ENCODE measurements at regions of chr1 and their contacts with region 1.

Region 1: GRCh38 chr1:101309334-101310311 is 72.8 kb downstream of the S1PR1 start:
- DNase-seq: peak; percentile 66
- H3K4me3 ChIP-seq: no peak overlapping the region; a peak in 1 of 4 replicates
- H3K27ac ChIP-seq: no peak overlapping the region
- H3K4me1 ChIP-seq: no peaks in the 10 kb centered on the region; a peak in 1 of 4 replicates
- H3K27me3 ChIP-seq: no peaks in the 10 kb centered on the region
- CTCF ChIP-seq: peak; percentile 96
- EP300 ChIP-seq: no peak
- RAD21 ChIP-seq: peak; percentile 91

Region 2: GRCh38 chr1:101238681-101239094 is 70.9 kb before region 1 on chr1:
- CTCF ChIA-PET with region 1: no interaction called
- POLR2A ChIA-PET with region 1: no interaction called
- DNase-seq: peak; percentile 86
- H3K4me3 ChIP-seq: no peak overlapping the region; a peak in 1 of 4 replicates
- H3K27ac ChIP-seq: no peak overlapping the region
- H3K4me1 ChIP-seq: peaks cover 0 to 8% of the 10 kb centered on the region in 2 experiments; a peak in 2 of 4 replicates
- H3K27me3 ChIP-seq: no peaks in the 10 kb centered on the region
- CTCF ChIP-seq: peak; percentile 94
- EP300 ChIP-seq: no peak
- RAD21 ChIP-seq: peak; percentile 85

Region 3: GRCh38 chr1:101323535-101323934 is 13.9 kb after region 1 on chr1:
- CTCF ChIA-PET with region 1: interaction called, 19 read pairs
- POLR2A ChIA-PET with region 1: no interaction called
- DNase-seq: no peak
- H3K4me3 ChIP-seq: no peak overlapping the region
- H3K27ac ChIP-seq: no peak overlapping the region
- H3K4me1 ChIP-seq: no peaks in the 10 kb centered on the region
- H3K27me3 ChIP-seq: no peaks in the 10 kb centered on the region; the same call in 1 of the 2 replicates
- CTCF ChIP-seq: no peak
- EP300 ChIP-seq: no peak
- RAD21 ChIP-seq: no peak

Region 4: GRCh38 chr1:101357444-101357986 is 47.9 kb after region 1 on chr1:
- CTCF ChIA-PET with region 1: interaction called, 34 read pairs
- POLR2A ChIA-PET with region 1: no interaction called
- DNase-seq: peak; percentile 72
- H3K4me3 ChIP-seq: no peak overlapping the region; a peak in 1 of 4 replicates
- H3K27ac ChIP-seq: no peak overlapping the region
- H3K4me1 ChIP-seq: no peaks in the 10 kb centered on the region
- H3K27me3 ChIP-seq: no peaks in the 10 kb centered on the region; the same call in 1 of the 2 replicates
- CTCF ChIP-seq: peak; percentile 91
- EP300 ChIP-seq: no peak
- RAD21 ChIP-seq: peak; percentile 81

Region 5: GRCh38 chr1:101506541-101507164 is 197.0 kb after region 1 on chr1:
- CTCF ChIA-PET with region 1: interaction called, 20 read pairs
- POLR2A ChIA-PET with region 1: no interaction called
- DNase-seq: peak; percentile 33
- H3K4me3 ChIP-seq: no peak overlapping the region
- H3K27ac ChIP-seq: no peak overlapping the region
- H3K4me1 ChIP-seq: no peaks in the 10 kb centered on the region; a peak in 1 of 4 replicates
- H3K27me3 ChIP-seq: no peaks in the 10 kb centered on the region
- CTCF ChIP-seq: peak; percentile 82
- EP300 ChIP-seq: no peak
- RAD21 ChIP-seq: peak; percentile 61

Region 6: GRCh38 chr1:101520302-101520701 is 210.7 kb after region 1 on chr1:
- CTCF ChIA-PET with region 1: interaction called, 12 read pairs
- POLR2A ChIA-PET with region 1: no interaction called
- DNase-seq: peak; percentile 42
- H3K4me3 ChIP-seq: peak overlapping the region in 1 of 2 experiments; percentile 38; a peak in 1 of 4 replicates
- H3K27ac ChIP-seq: no peak overlapping the region
- H3K4me1 ChIP-seq: no peaks in the 10 kb centered on the region
- H3K27me3 ChIP-seq: no peaks in the 10 kb centered on the region
- CTCF ChIP-seq: peak; percentile 86
- EP300 ChIP-seq: no peak
- RAD21 ChIP-seq: peak; percentile 84

Region 7: DNA sequence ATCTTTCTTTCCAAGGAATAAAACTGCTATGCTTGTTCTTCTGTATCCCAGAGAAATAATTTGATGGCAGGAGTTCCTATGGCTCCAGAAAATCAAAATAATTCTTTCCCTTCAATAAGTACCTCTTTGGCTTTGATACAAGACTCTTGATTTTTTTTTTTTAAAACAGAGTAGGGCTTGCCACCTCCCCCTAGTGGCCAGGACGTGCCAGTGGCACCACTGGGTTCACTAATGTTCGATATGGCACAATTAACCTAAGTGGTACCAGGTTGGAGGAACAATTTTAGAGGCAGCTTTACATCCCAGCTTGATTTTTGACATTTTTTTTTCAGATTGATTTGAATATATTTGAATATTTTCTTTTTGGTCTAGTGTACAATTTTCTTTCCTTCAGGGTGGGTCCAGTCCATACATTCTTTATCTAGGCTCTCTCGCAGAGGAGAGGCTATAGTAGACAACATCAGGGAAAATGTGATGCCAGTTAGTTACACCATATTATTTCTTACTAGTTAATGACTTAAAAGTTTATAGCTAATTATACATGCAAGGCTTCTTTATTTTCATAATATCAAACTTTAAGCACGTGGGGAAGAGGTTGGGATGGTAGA is 258.1 kb after region 1 on chr1:
- CTCF ChIA-PET with region 1: interaction called, 10 read pairs
- POLR2A ChIA-PET with region 1: no interaction called
- DNase-seq: peak; percentile 47
- H3K4me3 ChIP-seq: no peak overlapping the region
- H3K27ac ChIP-seq: no peak overlapping the region
- H3K4me1 ChIP-seq: no peaks in the 10 kb centered on the region
- H3K27me3 ChIP-seq: no peaks in the 10 kb centered on the region
- CTCF ChIP-seq: peak; percentile 97
- EP300 ChIP-seq: no peak
- RAD21 ChIP-seq: peak; percentile 66

Measured in SK-N-SH (cell line).